Posterior vena cava (tissue), 2 donors: ENCODE measurements at regions of chr7 and their contacts with region 1.

Region 1: GRCh38 chr7:100489824-100490223 is 6.1 kb downstream of the NYAP1 start:
- DNase-seq: no peak

Region 2: DNA sequence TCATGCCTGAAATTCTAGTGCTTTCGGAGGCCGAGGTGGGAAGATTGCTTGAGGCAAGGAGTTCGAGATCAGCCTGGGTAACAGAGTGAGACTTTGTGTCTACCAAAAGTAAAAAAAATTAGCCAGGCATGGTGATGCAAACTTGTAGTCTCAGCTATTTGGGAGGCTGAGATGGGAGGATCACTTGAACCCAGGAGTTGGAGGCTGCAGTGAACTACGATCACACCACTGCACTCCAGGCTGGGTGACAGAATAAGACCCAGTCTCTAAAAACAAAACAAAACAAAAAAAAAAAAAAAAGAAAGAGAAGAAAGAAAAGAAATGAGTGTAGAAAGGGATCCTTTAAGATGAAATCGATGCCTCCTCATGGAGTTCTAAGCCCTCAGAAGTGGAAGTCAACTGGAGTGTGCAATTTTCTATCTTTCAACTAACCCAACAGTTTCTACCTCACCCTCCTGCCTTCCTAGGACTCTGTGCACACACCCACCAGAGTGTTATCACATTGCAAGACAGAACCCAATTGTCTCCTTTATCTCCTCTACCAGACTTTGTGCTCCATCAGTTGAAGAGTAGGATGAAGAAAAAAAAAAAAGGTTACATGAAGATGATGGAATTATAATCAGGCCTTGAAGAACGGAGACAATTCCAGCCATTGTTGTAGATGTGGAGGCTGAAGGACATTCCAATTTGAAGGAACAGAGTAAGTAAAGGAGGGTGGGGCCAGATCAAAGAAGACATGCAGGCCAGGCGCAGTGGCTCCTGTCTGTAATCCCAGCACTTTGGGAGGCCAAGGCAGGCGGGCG is 20.8 kb after region 1 on chr7:
- intact Hi-C with region 1: loop called in 1 of 2 experiments (anchors 1 kb)
- DNase-seq: no peak